Activated CD4-positive, alpha-beta memory T cell treated with anti-CD3 and anti-CD28 coated beads for 36 hours (primary cell): ENCODE measurements at regions of chr9 and their contacts with region 1.

Region 1: GRCh38 chr9:110256380-110257096 is at the start of gene TXN:
- DNase-seq: peak; percentile 95
- H3K4me3 Mint-ChIP-seq: peak within 1 kb of the TSS; percentile 90
- H3K27ac Mint-ChIP-seq: peak within 1 kb of the TSS; percentile 97
- H3K4me1 Mint-ChIP-seq: peaks cover 57% of the 10 kb centered on the region
- H3K27me3 Mint-ChIP-seq: no peaks in the 10 kb centered on the region
- total RNA-seq, gene TXN: 554 to 573 TPM

Region 2: GRCh38 chr9:109119439-109120203 is 1136.9 kb before region 1 on chr9 and contains the start of gene TMEM245:
- CTCF ChIA-PET with region 1: no interaction called
- POLR2A ChIA-PET with region 1: no interaction called
- intact Hi-C with region 1: loop called (anchors 2 kb)
- DNase-seq: peak; percentile 97
- H3K4me3 Mint-ChIP-seq: peak within 1 kb of the TSS; percentile 88
- H3K27ac Mint-ChIP-seq: peak within 1 kb of the TSS; percentile 86
- H3K4me1 Mint-ChIP-seq: peaks cover 38% of the 10 kb centered on the region
- H3K27me3 Mint-ChIP-seq: no peaks in the 10 kb centered on the region
- total RNA-seq, gene TMEM245: 23.0 TPM

Region 3: DNA sequence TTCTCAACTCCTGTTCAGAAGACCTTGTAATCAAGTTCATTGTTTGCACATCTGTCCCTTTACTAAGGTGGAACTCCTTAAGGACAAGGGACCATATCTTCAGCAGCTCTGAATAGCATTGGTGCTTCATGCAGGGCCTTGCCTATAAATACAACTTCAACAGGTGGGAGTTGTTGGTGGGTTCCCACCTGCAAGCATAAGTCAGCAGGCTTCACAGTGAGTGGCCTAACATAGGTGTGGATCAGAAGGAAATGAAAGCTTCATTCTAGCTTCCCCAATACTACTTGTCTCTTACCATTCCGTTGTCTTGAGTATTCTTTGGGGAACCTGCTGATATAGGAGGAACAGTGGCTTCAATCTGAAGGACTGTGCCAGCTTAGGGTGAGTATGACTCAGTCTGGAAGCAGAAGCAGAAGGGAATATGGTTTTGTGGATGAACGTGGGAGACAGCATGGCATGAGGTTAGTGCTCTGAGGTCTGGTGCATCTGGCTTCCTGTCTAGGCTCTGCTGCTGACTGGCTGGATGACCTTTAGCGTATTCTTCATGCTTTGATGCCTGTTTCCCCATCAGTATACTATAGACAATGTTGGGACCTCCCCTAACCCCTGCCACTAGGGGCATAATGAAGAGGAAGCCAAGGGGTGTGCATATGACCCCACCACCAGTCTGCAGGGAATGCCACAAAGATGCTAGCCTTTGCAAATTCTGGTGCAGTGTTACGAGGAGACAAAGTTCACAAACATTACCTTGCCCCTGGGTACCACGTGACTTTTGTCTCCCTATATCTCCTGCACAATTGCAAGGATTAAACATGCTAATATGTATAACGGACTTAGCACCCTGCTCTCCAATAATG is 284.3 kb before region 1 on chr9:
- CTCF ChIA-PET with region 1: no interaction called
- POLR2A ChIA-PET with region 1: no interaction called
- intact Hi-C with region 1: loop called (anchors 1 kb)
- DNase-seq: peak; percentile 42
- H3K4me3 Mint-ChIP-seq: no peak overlapping the region
- H3K27ac Mint-ChIP-seq: no peak overlapping the region
- H3K4me1 Mint-ChIP-seq: peaks cover 79% of the 10 kb centered on the region
- H3K27me3 Mint-ChIP-seq: no peaks in the 10 kb centered on the region

Region 4: GRCh38 chr9:110152704-110153374 is 103.7 kb before region 1 on chr9:
- CTCF ChIA-PET with region 1: no interaction called
- POLR2A ChIA-PET with region 1: interaction called, 9 read pairs
- intact Hi-C with region 1: loop called (anchors 2 kb)
- DNase-seq: no peak
- H3K4me3 Mint-ChIP-seq: no peak overlapping the region
- H3K27ac Mint-ChIP-seq: no peak overlapping the region
- H3K4me1 Mint-ChIP-seq: peaks cover 56% of the 10 kb centered on the region
- H3K27me3 Mint-ChIP-seq: no peaks in the 10 kb centered on the region

Region 5: DNA sequence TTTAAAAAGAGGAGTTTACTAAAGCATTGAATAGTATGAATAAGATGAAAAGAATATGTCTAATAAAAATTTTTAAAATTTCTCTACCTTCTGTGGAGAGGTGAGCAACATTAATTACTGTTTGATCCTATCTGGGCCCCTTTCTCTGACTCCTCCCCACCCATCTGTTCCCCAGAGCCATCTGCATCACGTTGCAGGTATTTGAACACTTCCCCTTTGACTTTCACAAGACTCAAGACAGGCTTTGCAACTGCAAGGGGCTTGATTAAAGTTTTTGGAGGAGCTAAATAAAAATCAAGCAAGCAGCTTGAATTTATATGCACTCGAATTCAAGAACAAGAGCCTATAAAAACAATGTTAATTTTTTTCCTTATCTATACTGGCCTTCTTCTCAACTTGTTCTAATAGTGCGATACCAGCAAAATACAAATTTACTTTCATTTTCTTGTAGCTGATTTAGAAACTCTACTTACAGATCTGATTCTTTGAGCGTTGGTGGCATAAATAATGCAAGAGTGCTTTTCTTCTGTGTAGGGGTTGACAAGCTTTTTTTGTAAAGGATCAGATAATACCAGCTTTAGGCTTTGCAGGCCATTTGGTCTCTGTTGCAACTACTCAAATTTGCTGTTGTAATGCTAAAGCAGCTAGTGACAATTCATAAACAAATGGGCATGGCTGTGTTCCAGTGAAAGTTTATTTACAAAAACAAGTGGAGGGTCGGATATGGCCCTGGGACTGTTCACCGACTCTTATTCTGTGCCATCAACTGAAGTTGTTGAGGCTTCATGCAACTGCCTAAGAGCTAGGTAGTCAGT is 59.9 kb after region 1 on chr9:
- CTCF ChIA-PET with region 1: no interaction called
- POLR2A ChIA-PET with region 1: no interaction called
- intact Hi-C with region 1: loop called (anchors 5 kb)
- DNase-seq: no peak
- H3K4me3 Mint-ChIP-seq: no peak overlapping the region
- H3K27ac Mint-ChIP-seq: no peak overlapping the region
- H3K4me1 Mint-ChIP-seq: peaks cover 11% of the 10 kb centered on the region
- H3K27me3 Mint-ChIP-seq: peaks cover 2% of the 10 kb centered on the region

Region 6: DNA sequence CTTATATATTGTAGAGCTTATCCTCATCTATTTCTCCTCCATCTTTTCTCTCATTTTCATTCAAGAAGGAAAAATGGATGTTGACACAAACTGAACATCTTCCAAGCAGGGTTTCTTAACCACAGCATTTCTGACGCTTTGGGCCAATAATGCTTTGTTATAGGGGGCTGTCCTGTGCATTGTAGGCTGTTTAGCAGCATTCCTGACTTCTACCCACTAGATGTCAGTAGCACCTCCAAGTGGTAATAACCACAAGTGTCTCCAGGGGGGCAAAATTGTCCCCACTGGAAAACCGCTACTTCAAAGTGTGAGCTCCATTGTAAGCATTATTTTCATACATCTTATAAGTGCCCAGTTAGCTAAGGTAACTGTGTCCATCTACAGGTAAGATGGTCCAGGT is 83.8 kb after region 1 on chr9:
- CTCF ChIA-PET with region 1: no interaction called
- POLR2A ChIA-PET with region 1: no interaction called
- intact Hi-C with region 1: no loop called
- DNase-seq: no peak
- H3K4me3 Mint-ChIP-seq: no peak overlapping the region
- H3K27ac Mint-ChIP-seq: no peak overlapping the region
- H3K4me1 Mint-ChIP-seq: no peaks in the 10 kb centered on the region
- H3K27me3 Mint-ChIP-seq: peaks cover 2% of the 10 kb centered on the region

Region 7: DNA sequence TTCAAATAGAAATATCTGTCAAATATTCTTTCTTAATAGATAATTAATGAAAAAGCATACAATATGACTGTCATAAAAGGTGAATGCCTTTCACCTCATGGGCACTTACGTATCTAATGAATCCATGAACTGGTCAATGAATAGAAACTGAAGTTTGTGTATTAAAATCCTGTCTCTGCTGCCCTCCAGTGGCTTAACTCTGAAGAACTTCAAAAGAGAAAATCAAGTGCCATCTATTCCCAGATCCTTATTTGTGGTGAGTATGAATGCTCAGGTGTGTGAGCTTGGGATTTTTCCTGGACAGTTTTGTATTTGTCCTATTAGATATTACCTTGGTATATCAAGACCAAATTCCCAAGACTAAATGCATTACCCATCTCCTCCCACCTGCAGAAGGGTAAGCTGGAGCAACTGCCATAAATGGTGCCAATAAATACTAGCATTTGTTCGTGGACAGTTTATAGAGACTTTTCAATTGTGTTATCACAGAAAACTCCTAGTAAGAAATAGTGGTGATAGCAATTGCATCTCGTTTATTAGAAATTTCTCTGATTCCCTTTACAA is 367.0 kb after region 1 on chr9:
- CTCF ChIA-PET with region 1: no interaction called
- POLR2A ChIA-PET with region 1: no interaction called
- intact Hi-C with region 1: loop called (anchors 2 kb)
- DNase-seq: no peak
- H3K4me3 Mint-ChIP-seq: no peak overlapping the region
- H3K27ac Mint-ChIP-seq: no peak overlapping the region
- H3K4me1 Mint-ChIP-seq: peaks cover 11% of the 10 kb centered on the region
- H3K27me3 Mint-ChIP-seq: no peaks in the 10 kb centered on the region

Region 8: GRCh38 chr9:110954822-110955291 is 698.3 kb after region 1 on chr9:
- CTCF ChIA-PET with region 1: no interaction called
- POLR2A ChIA-PET with region 1: no interaction called
- intact Hi-C with region 1: no loop called
- DNase-seq: no peak
- H3K4me3 Mint-ChIP-seq: no peak overlapping the region
- H3K27ac Mint-ChIP-seq: no peak overlapping the region
- H3K4me1 Mint-ChIP-seq: no peaks in the 10 kb centered on the region
- H3K27me3 Mint-ChIP-seq: no peaks in the 10 kb centered on the region

Region 9: GRCh38 chr9:111916234-111916645 is 1659.7 kb after region 1 on chr9:
- CTCF ChIA-PET with region 1: no interaction called
- POLR2A ChIA-PET with region 1: no interaction called
- intact Hi-C with region 1: loop called (anchors 10 kb)
- DNase-seq: peak; percentile 53
- H3K4me3 Mint-ChIP-seq: peak overlapping the region; percentile 8
- H3K27ac Mint-ChIP-seq: peak overlapping the region; percentile 77
- H3K4me1 Mint-ChIP-seq: peaks cover 54% of the 10 kb centered on the region
- H3K27me3 Mint-ChIP-seq: no peaks in the 10 kb centered on the region